HepG2 (cell line): ENCODE measurements at regions of chr2 and their contacts with region 1.

Region 1: DNA sequence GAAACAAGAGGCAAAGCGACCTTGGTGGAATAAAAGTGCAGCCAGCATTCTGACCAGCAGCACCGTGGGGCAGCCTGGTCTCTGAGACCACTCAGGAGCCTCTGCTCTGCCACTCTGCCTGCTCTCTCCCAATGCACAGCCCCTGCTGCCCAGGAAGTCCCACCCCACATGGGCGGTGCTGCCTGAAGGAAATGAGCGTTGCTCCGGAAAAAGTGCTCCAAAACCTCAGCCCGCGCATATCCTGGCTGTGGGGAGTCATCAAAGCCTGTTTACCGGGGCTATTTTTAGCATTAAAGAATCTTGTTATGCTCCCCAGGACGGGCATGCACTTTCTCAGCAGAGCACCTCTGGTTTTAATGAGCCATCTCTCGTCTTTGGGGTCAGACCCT is 54.5 kb downstream of the EPAS1 start:
- DNase-seq: no peak
- ATAC-seq: no peak
- H3K4me3 ChIP-seq: no peak overlapping the region
- H3K27ac ChIP-seq: no peak overlapping the region
- H3K4me1 ChIP-seq: peaks cover 26% of the 10 kb centered on the region
- H3K27me3 ChIP-seq: no peaks in the 10 kb centered on the region
- CTCF ChIP-seq: no peak
- EP300 ChIP-seq: no peak
- POLR2A ChIP-seq: no peak
- RAD21 ChIP-seq: no peak

Region 2: GRCh38 chr2:46073540-46074018 is 278.2 kb before region 1 on chr2:
- CTCF ChIA-PET with region 1: no interaction called
- POLR2A ChIA-PET with region 1: no interaction called
- in situ Hi-C with region 1: loop called (anchors 10 kb)
- intact Hi-C with region 1: no loop called
- DNase-seq: peak; percentile 39
- ATAC-seq: peak; percentile 76
- H3K4me3 ChIP-seq: no peak overlapping the region
- H3K27ac ChIP-seq: no peak overlapping the region
- H3K4me1 ChIP-seq: no peaks in the 10 kb centered on the region; the same call in 1 of the 2 replicates
- H3K27me3 ChIP-seq: no peaks in the 10 kb centered on the region
- CTCF ChIP-seq: no peak
- EP300 ChIP-seq: no peak
- POLR2A ChIP-seq: no peak
- RAD21 ChIP-seq: no peak

Region 3: DNA sequence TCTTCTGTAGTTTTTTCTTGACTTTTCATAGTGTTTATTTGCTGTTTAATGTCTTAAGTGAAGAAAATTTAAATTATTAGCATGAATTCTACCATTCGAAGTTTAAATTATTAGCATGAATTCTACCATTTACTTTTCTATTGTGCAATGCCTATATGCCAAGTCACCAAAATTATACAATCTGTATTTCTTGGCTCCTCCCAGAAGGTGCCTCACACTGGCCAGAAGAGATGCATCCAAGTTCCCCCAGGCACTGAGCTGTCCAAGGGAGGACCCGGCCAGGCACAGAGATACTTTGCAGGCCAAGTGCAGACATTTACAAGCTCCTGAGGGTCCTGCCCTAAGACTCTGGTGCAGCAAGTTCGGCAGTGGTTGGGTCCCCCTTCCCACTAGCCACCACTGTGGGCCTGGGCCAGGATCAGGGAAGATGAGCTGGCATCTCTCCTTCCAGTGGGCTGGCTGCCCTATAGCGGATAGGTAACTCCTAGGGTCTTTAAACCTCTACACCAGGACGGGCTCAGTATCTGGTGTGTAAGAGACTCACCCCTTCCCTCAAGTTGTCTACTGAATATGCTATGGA is 158.9 kb after region 1 on chr2:
- CTCF ChIA-PET with region 1: no interaction called
- POLR2A ChIA-PET with region 1: no interaction called
- in situ Hi-C with region 1: no loop called
- intact Hi-C with region 1: no loop called
- DNase-seq: no peak
- ATAC-seq: no peak
- H3K4me3 ChIP-seq: no peak overlapping the region
- H3K27ac ChIP-seq: no peak overlapping the region
- H3K4me1 ChIP-seq: no peaks in the 10 kb centered on the region
- H3K27me3 ChIP-seq: peaks cover 2 to 40% of the 10 kb centered on the region in 2 experiments; a peak in 3 of 5 replicates
- CTCF ChIP-seq: no peak
- EP300 ChIP-seq: no peak
- POLR2A ChIP-seq: no peak
- RAD21 ChIP-seq: no peak